T-cell (primary cell): ENCODE measurements at regions of chr4 and their contacts with region 1.

Region 1: DNA sequence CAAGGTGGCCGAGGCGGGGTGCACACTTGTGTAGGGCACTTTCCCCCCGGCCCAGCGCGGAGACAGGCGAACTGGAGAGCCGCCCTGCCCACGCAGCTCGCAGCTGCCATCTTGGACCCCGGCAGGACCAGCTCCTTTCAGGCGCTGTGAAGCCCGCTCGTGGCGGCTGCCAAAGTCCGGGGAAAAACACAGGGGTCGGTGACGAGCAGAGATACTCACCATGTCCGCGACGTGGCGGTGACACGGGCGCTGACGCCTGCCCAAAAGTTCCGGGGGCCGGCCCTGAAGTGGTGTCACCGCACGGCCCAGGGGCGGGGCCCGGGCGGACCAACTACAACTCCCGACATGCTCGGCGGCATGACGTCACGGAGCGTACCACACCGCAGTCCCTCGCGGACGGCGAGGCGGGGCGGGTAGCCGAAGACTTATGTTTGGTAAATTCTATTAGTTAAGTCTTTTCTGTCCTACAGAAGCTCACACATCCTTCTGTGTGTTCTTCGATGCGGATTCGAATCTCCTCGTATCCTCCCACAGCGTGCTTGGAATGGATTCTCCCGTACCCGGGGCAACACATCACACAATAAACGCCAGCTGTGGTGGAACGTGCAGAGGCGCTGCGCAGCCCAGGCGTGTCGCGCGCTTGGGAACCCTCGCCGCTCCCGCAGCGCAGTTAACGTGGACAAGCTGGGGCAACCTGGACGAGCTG is at the start of gene UFSP2:
- DNase-seq: peak; percentile 71 to 96 (median 85)
- ATAC-seq: peak; percentile 88 to 92 (median 92)
- H3K4me3 ChIP-seq: peak within 1 kb of the TSS; percentile 92 to 95
- H3K4me3 Mint-ChIP-seq: peak within 1 kb of the TSS; percentile 86 to 92 (median 86)
- H3K27ac ChIP-seq: peak within 1 kb of the TSS; percentile 99
- H3K27ac Mint-ChIP-seq: peak within 1 kb of the TSS; percentile 98 to 100
- H3K4me1 ChIP-seq: peaks cover 8 to 21% of the 10 kb centered on the region in 2 experiments
- H3K4me1 Mint-ChIP-seq: peaks cover 33 to 40% (median 34%) of the 10 kb centered on the region in 3 donors
- H3K27me3 ChIP-seq: peaks cover 2 to 13% of the 10 kb centered on the region in 2 experiments
- H3K27me3 Mint-ChIP-seq: peaks cover 0 to 3% of the 10 kb centered on the region in 2 donors
- total RNA-seq, gene UFSP2: 13.9 to 30.1 (median 20.3) TPM

Region 2: GRCh38 chr4:185395956-185396723 is 29.7 kb before region 1 on chr4:
- CTCF ChIA-PET with region 1: interaction called, 3 to 16 read pairs
- POLR2A ChIA-PET with region 1: interaction called, 6 to 51 read pairs
- DNase-seq: peak; percentile 88 to 98 (median 94)
- ATAC-seq: peak; percentile 91 to 96 (median 92)
- H3K4me3 ChIP-seq: peak overlapping the region; percentile 87 to 98
- H3K4me3 Mint-ChIP-seq: peak overlapping the region; percentile 90 to 95 (median 94)
- H3K27ac ChIP-seq: peak overlapping the region; percentile 96
- H3K27ac Mint-ChIP-seq: peak overlapping the region; percentile 94 to 96
- H3K4me1 ChIP-seq: peaks cover 4 to 7% of the 10 kb centered on the region in 2 experiments
- H3K4me1 Mint-ChIP-seq: peaks cover 21 to 31% (median 26%) of the 10 kb centered on the region in 3 donors
- H3K27me3 ChIP-seq: no peaks in the 10 kb centered on the region
- H3K27me3 Mint-ChIP-seq: no peaks in the 10 kb centered on the region

Region 3: GRCh38 chr4:185457136-185457535 is 31.3 kb after region 1 on chr4:
- CTCF ChIA-PET with region 1: no interaction called
- POLR2A ChIA-PET with region 1: no interaction called
- DNase-seq: no peak
- ATAC-seq: no peak
- H3K4me3 ChIP-seq: no peak overlapping the region
- H3K4me3 Mint-ChIP-seq: no peak overlapping the region
- H3K27ac ChIP-seq: no peak overlapping the region
- H3K27ac Mint-ChIP-seq: no peak overlapping the region
- H3K4me1 ChIP-seq: no peaks in the 10 kb centered on the region
- H3K4me1 Mint-ChIP-seq: no peaks in the 10 kb centered on the region
- H3K27me3 ChIP-seq: peaks cover 0 to 7% of the 10 kb centered on the region in 2 experiments
- H3K27me3 Mint-ChIP-seq: peaks cover 19 to 25% of the 10 kb centered on the region in 2 donors